Posterior vena cava (tissue), 2 donors: ENCODE measurements at regions of chr9 and their contacts with region 1.

Region 1: DNA sequence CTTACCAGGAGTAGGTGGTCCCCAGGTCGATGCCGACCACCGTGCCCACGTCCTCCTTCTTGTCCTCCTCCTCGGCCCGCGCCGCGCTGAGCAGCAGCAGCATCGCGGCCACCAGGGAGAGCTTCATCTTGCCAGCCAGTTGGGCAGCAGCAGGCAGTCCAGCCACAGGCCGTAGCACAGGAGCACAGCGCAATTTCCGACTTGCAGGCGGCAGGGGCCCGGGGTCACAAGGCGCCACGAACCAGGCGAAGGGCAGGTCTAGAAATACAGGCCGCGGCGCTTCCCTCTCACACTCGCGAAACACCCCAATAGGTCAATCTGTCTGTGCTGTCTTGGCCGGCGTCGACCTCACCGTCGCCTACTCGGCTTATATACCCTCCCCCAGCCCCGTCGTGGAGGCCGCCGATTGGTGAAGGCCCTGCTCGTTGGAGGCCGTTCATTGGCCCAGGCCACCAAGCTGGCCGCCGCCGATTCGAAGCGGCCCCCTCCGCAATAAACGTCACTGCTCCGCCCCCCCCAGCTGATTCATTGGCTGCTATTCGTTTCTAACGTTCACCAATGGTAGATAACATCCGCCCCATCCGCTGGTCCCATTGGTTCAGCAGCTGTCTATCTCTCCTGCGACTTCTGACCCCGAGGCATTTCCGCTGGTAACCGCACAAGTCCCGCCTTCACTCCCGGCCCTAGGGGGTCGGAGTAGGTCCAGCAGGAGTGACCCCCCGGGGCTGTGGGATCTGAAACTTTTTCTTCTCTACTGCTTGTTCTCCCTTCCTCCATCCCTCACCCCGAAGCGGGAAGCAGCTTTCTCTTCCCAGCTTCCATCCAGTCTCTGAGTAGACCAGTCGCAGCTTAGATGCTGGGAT is at the start of gene HSPA5:
- DNase-seq: peak; percentile 100
- total RNA-seq, gene HSPA5: 160 to 218 TPM

Region 2: GRCh38 chr9:125089331-125089730 is 151.9 kb before region 1 on chr9:
- intact Hi-C with region 1: no loop called
- DNase-seq: no peak

Region 3: GRCh38 chr9:125332527-125332926 is 91.3 kb after region 1 on chr9:
- intact Hi-C with region 1: loop called (anchors 10 kb)
- DNase-seq: no peak